Tibial artery (tissue), 4 donors: ENCODE measurements at regions of chr19 and their contacts with region 1.

Region 1: DNA sequence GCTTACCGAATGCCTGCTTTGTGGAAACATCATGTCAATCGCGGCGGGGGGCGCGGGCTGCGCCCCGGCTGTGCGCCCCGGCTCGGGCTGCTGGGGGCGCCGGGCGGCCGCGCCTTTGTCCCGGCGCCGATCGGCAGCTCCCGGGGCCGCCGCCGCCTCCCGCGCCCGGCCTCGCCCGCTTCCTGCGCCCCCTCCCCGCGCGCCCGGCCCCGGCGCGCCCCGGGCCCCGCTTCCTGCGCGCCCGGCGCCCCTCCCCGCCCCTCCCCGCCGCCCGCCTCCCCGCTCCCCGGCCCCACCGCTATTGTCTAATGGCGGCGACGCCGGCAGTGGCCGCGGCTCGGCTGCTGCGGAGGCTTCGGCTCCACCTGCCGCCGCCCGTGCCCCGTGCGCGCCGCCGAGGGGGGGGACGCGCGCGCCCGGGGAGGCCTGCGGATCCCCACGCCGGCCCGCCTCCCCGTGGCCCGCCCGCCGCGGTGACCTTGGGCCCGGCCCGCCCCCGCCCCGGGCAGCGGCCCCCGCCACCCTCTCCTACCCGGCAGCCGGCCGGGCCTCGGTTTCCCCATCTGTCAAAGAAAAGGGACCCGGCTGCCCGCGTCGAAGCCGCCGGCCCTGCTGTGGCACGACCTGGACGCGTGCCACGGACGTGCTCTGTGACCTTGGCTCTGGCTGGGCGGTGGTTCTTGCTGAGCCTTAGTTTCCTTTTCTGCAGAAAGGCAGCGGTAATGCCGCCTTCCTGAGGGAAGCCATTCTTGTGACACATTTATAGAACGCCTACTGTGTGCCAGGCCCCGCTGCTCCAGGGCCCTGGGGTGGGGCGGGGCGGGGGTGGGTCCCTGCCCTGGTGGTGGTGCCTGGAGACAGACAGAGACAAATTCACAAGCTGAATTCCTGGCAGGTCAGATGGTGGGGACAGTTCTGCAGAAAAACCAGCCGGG is at the start of gene TLE5:
- DNase-seq: peak; percentile 54 to 76
- H3K4me3 ChIP-seq: peak within 1 kb of the TSS; percentile 85 to 89
- H3K27ac ChIP-seq: peak within 1 kb of the TSS; percentile 89 to 95
- H3K4me1 ChIP-seq: peaks cover 0 to 37% (median 26%) of the 10 kb centered on the region in 4 donors
- H3K27me3 ChIP-seq: no peaks in the 10 kb centered on the region
- CTCF ChIP-seq: no peak

Region 2: GRCh38 chr19:2969104-2969504 is 93.3 kb before region 1 on chr19:
- intact Hi-C with region 1: loop called (anchors 5 kb)
- DNase-seq: no peak
- H3K4me3 ChIP-seq: no peak overlapping the region
- H3K27ac ChIP-seq: peak overlapping the region; percentile 0 to 11
- H3K4me1 ChIP-seq: peaks cover 0 to 42% (median 25%) of the 10 kb centered on the region in 4 donors
- H3K27me3 ChIP-seq: peaks cover 0 to 21% of the 10 kb centered on the region in 2 donors
- CTCF ChIP-seq: no peak

Region 3: GRCh38 chr19:3185482-3186376 is 123.3 kb after region 1 on chr19 and contains the start of gene NCLN:
- intact Hi-C with region 1: loop called (anchors 5 kb)
- DNase-seq: peak; percentile 94 to 96
- H3K4me3 ChIP-seq: peak within 1 kb of the TSS; percentile 77 to 99
- H3K27ac ChIP-seq: peak within 1 kb of the TSS; percentile 61 to 67
- H3K4me1 ChIP-seq: peaks cover 0 to 40% (median 25%) of the 10 kb centered on the region in 4 donors
- H3K27me3 ChIP-seq: no peaks in the 10 kb centered on the region
- CTCF ChIP-seq: no peak

Region 4: GRCh38 chr19:3319643-3320353 is 257.4 kb after region 1 on chr19:
- intact Hi-C with region 1: no loop called
- DNase-seq: no peak
- H3K4me3 ChIP-seq: no peak overlapping the region
- H3K27ac ChIP-seq: no peak overlapping the region
- H3K4me1 ChIP-seq: no peaks in the 10 kb centered on the region
- H3K27me3 ChIP-seq: peaks cover 0 to 69% of the 10 kb centered on the region in 2 donors
- CTCF ChIP-seq: no peak

Region 5: GRCh38 chr19:3642987-3643673 is 580.7 kb after region 1 on chr19:
- intact Hi-C with region 1: no loop called
- DNase-seq: no peak
- H3K4me3 ChIP-seq: no peak overlapping the region
- H3K27ac ChIP-seq: no peak overlapping the region
- H3K4me1 ChIP-seq: peaks cover 0 to 14% (median 4%) of the 10 kb centered on the region in 4 donors
- H3K27me3 ChIP-seq: no peaks in the 10 kb centered on the region
- CTCF ChIP-seq: no peak